Right ventricle myocardium inferior (tissue), 1 donor: ENCODE measurements at regions of chr2 and their contacts with region 1.

Region 1: GRCh38 chr2:32772638-32773447 is 145.0 kb downstream of the TTC27 start:
- DNase-seq: no peak
- ATAC-seq: peak; percentile 73

Region 2: GRCh38 chr2:32559136-32559535 is 213.7 kb before region 1 on chr2:
- intact Hi-C with region 1: loop called (anchors 5 kb)
- DNase-seq: no peak
- ATAC-seq: peak; percentile 89

Region 3: DNA sequence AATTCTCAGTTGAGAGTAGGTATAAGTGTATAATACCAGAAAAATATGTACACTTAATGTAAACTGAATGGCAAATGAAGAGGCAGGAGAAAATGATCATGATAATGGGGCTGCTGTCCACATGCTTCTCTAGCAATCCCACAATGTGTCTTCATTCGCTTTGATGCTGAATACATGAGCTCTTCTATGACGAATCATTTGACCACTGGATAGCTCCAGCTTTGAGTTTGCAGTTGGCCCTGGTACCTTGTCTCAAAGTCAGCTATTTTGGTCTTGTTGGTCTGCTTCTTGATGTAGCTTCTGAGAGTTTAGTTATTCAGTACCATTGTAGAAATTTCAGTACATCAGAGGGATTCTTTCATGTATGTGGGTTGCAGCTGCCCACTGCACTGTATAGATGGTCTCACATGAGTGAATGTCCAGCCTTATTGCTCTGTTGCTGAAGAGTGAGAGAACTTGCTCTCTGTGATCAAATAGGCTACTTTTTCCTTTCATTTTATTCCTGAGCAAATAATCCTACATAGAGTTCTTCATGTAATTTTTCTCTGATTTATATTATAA is 39.9 kb before region 1 on chr2:
- intact Hi-C with region 1: no loop called
- DNase-seq: no peak
- ATAC-seq: no peak

Region 4: GRCh38 chr2:32946314-32947075 is 173.7 kb after region 1 on chr2 and contains the start of gene LTBP1:
- intact Hi-C with region 1: loop called (anchors 1 kb)
- DNase-seq: peak; percentile 89
- ATAC-seq: peak; percentile 90
- total RNA-seq, gene LTBP1: 90.4 TPM

Region 5: GRCh38 chr2:33086400-33087015 is 313.7 kb after region 1 on chr2:
- intact Hi-C with region 1: loop called (anchors 5 kb)
- DNase-seq: no peak
- ATAC-seq: peak; percentile 41

Region 6: GRCh38 chr2:33372940-33373553 is 600.2 kb after region 1 on chr2:
- intact Hi-C with region 1: loop called (anchors 10 kb)
- DNase-seq: no peak
- ATAC-seq: no peak